Heart right ventricle (tissue), 16 donors: ENCODE measurements at regions of chr11 and their contacts with region 1.

Region 1: DNA sequence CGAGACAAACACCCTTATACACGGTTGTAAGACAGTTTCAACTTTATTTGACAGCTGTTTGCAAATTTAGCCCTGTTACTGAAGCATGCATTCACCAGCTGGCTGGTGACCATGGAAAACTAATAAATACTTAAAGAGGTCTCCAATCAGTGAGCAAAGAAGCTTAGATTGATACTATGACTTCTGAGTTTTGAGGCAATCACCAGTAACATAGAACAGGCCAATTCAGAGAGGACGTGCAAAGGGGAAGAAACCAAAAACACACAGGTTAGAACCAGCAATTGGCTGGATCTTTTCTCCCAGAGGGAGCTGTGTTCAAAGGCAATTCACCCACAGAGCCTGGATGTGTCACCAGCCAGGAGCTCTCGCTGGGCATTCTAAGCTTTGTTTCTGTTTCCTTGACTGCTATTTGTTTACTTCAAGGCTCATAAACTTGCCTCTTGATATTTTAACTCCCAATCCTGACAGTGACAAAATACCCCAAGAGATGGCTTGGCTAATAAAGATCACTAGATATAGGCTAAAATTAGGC is 113.6 kb upstream of the MTMR2 start:
- DNase-seq: no peak
- ATAC-seq: no peak
- H3K4me3 ChIP-seq: no peak overlapping the region
- H3K27ac ChIP-seq: no peak overlapping the region
- H3K4me1 ChIP-seq: peaks cover 0 to 25% (median 0%) of the 10 kb centered on the region in 9 donors
- H3K27me3 ChIP-seq: no peaks in the 10 kb centered on the region
- CTCF ChIP-seq: no peak

Region 2: DNA sequence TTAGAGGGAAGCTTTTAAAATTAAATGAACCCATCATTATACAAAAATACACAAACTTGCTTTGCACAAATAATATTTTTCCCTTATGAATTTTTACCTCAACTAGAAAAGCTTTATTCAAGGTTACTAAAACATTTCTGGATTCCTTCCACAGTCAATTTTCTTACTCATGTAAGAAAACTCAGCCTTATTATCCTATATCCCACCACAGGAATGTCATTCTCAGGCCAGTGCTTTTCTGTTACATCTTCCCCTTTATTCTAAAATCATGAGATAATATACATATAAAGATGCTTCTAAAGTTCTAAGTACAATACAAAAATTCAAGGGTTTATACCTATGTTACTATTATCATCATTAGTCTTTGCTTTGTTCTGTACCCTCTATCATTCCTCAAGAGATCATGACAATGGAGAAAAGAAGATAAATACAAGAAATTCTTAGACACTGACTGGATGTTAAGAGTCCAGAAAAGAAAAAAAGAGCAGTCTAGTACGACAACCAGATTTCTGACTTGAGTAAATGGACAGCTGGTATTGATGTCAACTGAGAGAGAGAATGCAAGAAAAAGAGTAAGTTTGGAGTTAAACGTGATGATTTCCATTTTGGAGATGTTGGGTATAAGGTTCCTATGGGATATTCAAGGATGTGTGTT is 173.9 kb before region 1 on chr11:
- intact Hi-C with region 1: no loop called
- DNase-seq: no peak
- ATAC-seq: no peak
- H3K4me3 ChIP-seq: no peak overlapping the region
- H3K27ac ChIP-seq: no peak overlapping the region
- H3K4me1 ChIP-seq: no peaks in the 10 kb centered on the region
- H3K27me3 ChIP-seq: no peaks in the 10 kb centered on the region
- CTCF ChIP-seq: no peak

Region 3: DNA sequence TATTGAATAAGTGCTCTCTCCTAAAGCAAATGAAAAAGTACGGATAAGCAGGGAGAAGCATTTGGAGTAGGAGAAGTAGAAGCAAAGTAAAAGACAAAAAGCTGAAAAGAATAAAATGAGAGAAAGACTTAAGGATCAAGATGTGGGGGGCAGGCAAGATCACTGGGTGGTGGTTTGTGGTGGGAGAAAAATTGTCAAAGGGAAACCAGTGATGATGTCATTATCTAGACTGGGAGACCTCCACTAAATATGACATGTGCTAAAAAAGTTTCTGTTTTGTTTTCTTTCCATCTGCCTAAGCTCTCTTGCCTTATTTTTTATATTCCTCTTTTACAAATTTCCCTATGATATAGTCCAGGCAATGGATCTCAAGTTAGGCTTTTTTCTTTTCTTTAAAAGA is 320.3 kb after region 1 on chr11:
- intact Hi-C with region 1: loop called in 1 of 10 experiments (anchors 10 kb)
- DNase-seq: no peak
- ATAC-seq: no peak
- H3K4me3 ChIP-seq: no peak overlapping the region
- H3K27ac ChIP-seq: no peak overlapping the region
- H3K4me1 ChIP-seq: no peaks in the 10 kb centered on the region
- H3K27me3 ChIP-seq: no peaks in the 10 kb centered on the region
- CTCF ChIP-seq: no peak